ENCODE measurements at regions of chr10 and their contacts with region 1.

Region 1: GRCh38 chr10:70139151-70139996 is 6.7 kb upstream of the AIFM2 start:
- DNase-seq: no peak
- H3K4me3 ChIP-seq: no peak overlapping the region
- H3K27ac ChIP-seq: no peak overlapping the region
- H3K4me1 ChIP-seq: peaks cover 4% of the 10 kb centered on the region
- H3K27me3 ChIP-seq: no peaks in the 10 kb centered on the region
- CTCF ChIP-seq: no peak

Region 2: DNA sequence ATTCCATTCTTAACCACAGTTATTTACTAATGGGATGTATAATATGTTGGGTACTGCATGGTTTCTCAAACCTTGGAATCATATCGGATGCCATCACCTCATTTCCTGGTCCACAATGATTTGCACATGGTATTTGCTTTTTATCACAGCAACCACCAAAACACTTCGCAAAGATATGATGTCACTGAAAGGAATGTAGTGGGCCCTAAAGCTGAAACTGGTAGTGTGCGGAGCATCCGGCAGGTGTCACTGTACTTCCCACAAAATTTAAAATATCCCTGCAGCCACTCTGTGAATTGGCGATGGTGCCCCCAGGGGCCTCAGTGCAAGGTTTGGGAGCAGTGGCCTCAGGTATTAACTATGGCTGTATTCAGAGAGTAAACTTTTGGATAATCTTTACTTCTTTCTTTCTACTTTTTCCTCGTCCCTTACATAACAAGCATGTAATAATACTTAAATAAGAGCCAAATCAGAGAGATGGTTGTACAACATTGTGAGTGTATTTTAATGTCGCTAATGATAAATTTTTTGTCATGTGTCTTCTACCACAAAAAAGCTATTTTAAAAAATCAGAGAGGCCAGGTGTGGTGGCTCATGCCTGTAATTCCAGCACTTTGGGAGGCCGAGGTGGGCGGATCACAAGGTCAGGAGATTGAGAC is 443.2 kb before region 1 on chr10:
- CTCF ChIA-PET with region 1: no interaction called
- POLR2A ChIA-PET with region 1: interaction called, 11 read pairs
- intact Hi-C with region 1: no loop called
- DNase-seq: peak; percentile 75
- H3K4me3 ChIP-seq: no peak overlapping the region
- H3K27ac ChIP-seq: no peak overlapping the region
- H3K4me1 ChIP-seq: no peaks in the 10 kb centered on the region
- H3K27me3 ChIP-seq: peaks cover 22% of the 10 kb centered on the region
- CTCF ChIP-seq: peak; percentile 80

Region 3: GRCh38 chr10:71244431-71245419 is 1105.4 kb after region 1 on chr10:
- CTCF ChIA-PET with region 1: no interaction called
- POLR2A ChIA-PET with region 1: no interaction called
- intact Hi-C with region 1: no loop called
- DNase-seq: peak; percentile 57
- H3K4me3 ChIP-seq: no peak overlapping the region
- H3K27ac ChIP-seq: peak overlapping the region; percentile 49
- H3K4me1 ChIP-seq: peaks cover 46% of the 10 kb centered on the region
- H3K27me3 ChIP-seq: no peaks in the 10 kb centered on the region
- CTCF ChIP-seq: no peak